HEK293 (cell line): ENCODE measurements at regions of chr5 and their contacts with region 1.

Region 1: GRCh38 chr5:35220967-35221366 is 9.3 kb downstream of the PRLR start:
- H3K4me3 ChIP-seq: no peak overlapping the region
- H3K27ac ChIP-seq: no peak overlapping the region
- H3K4me1 ChIP-seq: no peaks in the 10 kb centered on the region
- CTCF ChIP-seq: no peak

Region 2: DNA sequence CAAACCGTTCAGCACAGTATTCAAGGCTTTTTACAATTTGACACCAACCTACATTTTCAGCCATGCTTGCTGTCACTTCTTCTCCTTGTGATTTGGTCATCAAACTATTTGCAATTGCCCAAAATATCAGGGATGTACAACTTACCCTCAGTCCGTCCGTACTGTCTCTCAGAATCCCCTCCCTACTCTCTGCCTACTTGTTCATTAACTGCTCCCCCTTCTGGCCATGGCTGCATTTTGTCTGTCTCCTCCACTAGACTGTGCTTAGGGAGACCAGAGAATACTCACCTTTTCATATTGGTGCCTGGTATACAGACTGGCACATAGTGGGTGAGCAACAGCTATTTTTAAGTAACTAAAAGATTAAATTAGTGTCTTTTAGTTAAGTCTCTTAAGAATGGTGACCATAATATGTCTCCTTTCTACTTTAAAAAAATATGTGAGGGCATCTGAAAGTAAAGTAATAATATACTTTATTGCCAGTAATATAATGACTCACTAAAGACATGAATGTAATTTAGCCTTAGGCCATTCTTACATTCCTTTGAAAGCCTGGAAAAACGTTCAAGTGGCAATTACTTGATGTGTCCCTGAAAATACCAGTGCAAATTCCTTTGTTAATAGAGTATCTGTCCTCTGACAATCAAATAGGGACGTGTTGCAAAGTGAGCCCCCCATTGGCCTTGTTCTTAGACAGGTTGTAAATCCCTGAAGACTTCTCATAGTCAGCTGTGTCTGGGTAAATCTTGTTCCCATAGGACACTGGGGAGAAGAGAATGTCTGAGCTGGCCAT is 18.5 kb before region 1 on chr5:
- CTCF ChIA-PET with region 1: interaction called, 10 read pairs
- POLR2A ChIA-PET with region 1: no interaction called
- H3K4me3 ChIP-seq: no peak overlapping the region
- H3K27ac ChIP-seq: no peak overlapping the region
- H3K4me1 ChIP-seq: peaks cover 12% of the 10 kb centered on the region
- CTCF ChIP-seq: peak; percentile 70

Region 3: DNA sequence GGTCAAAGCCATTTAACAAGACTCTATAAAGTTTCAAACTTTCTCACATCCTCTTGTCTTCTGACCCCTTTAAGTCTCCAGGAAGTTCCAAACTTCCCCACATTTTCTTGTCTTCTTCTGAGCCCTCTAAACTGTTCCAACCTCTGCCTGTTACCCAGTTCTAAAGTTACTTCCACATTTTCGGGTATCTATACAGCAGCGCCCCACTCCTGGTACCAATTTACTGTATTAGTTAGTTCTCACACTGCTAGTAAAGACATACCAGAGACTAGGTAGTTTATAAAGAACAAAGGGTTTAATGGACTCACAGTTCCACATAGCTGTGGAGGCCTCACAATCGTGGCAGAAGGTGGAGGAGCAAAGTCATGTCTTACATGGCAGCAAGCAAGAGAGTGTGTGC is 32.6 kb after region 1 on chr5:
- CTCF ChIA-PET with region 1: no interaction called
- POLR2A ChIA-PET with region 1: no interaction called
- H3K4me3 ChIP-seq: no peak overlapping the region
- H3K27ac ChIP-seq: no peak overlapping the region
- H3K4me1 ChIP-seq: peaks cover 4% of the 10 kb centered on the region; the same call in 1 of the 2 replicates
- CTCF ChIP-seq: no peak